A673 (cell line): ENCODE measurements at regions of chr19 and their contacts with region 1.

Region 1: DNA sequence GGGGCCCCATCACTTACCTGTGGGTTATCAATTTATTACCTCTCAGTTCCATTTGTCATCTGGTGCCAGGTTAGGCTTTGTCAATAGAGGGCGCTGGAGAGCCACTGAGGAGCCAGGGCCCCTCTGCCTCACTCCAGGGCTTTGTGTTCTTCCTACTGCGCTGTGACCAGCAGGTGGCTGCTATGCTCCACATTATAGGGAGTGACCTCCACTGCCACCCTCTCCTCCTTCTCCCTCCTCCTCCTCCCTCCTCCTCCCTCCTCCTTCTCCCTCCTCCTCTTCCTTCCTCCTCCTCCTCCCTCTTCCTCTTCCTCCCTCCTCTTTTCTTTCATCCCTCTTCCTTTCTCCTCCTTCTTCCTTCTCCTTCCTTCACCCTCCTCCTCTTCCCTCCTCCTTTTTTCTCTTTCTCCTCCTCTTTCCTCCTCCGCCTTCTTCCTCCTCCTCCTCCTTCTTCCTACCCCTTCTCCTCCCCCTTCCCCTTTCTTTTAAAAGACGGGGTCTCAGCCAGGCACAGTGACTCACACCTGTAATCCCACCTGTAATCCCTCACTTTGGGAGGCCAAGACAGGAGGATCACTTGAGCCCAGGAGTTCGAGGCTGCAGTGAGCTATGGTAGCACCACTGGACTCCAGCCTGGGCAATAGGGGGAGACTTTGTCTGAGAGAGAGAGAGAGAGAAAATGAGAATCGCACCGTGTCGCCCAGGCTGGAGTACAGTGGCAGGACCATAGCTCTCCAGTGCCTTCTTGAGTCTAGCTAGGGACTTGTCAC is 10.3 kb upstream of the ZBTB32 start:
- DNase-seq: peak; percentile 92
- H3K4me3 ChIP-seq: no peak overlapping the region
- H3K27ac ChIP-seq: no peak overlapping the region
- H3K4me1 ChIP-seq: no peaks in the 10 kb centered on the region
- H3K27me3 ChIP-seq: no peaks in the 10 kb centered on the region
- CTCF ChIP-seq: peak; percentile 98

Region 2: GRCh38 chr19:35270381-35270811 is 423.6 kb before region 1 on chr19:
- CTCF ChIA-PET with region 1: interaction called, 10 read pairs
- POLR2A ChIA-PET with region 1: no interaction called
- intact Hi-C with region 1: no loop called
- DNase-seq: no peak
- H3K4me3 ChIP-seq: no peak overlapping the region
- H3K27ac ChIP-seq: no peak overlapping the region
- H3K4me1 ChIP-seq: no peaks in the 10 kb centered on the region
- H3K27me3 ChIP-seq: no peaks in the 10 kb centered on the region
- CTCF ChIP-seq: no peak

Region 3: GRCh38 chr19:35716801-35717666 is 23.0 kb after region 1 on chr19:
- CTCF ChIA-PET with region 1: no interaction called
- POLR2A ChIA-PET with region 1: no interaction called
- intact Hi-C with region 1: loop called (anchors 2 kb)
- DNase-seq: peak; percentile 98
- H3K4me3 ChIP-seq: peak overlapping the region; percentile 96
- H3K27ac ChIP-seq: peak overlapping the region; percentile 89
- H3K4me1 ChIP-seq: peaks cover 8% of the 10 kb centered on the region
- H3K27me3 ChIP-seq: no peaks in the 10 kb centered on the region
- CTCF ChIP-seq: peak; percentile 87

Region 4: DNA sequence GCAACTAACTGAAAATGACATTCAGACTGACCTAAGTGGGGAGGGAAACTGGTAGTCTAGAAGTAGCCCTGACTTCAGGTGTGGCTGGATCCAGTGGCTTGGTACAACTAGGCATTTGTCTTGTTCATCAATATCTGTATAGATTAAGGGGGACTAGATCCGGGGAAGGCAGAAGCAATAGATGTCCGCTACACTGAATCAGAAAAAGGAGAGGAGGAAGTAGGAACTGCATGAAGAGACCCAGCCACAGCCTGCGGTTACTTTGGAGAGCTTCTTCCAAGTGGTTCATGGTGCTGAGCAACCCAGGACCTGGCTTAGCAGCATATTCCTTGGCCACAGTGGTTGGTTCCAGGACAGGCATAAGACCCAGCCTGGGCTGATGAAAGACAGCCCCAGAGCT is 128.6 kb after region 1 on chr19:
- CTCF ChIA-PET with region 1: interaction called, 4 read pairs
- POLR2A ChIA-PET with region 1: no interaction called
- intact Hi-C with region 1: loop called (anchors 5 kb)
- DNase-seq: no peak
- H3K4me3 ChIP-seq: no peak overlapping the region
- H3K27ac ChIP-seq: no peak overlapping the region
- H3K4me1 ChIP-seq: no peaks in the 10 kb centered on the region
- H3K27me3 ChIP-seq: peaks cover 23% of the 10 kb centered on the region
- CTCF ChIP-seq: no peak

Region 5: GRCh38 chr19:35931161-35931873 is 237.3 kb after region 1 on chr19:
- CTCF ChIA-PET with region 1: no interaction called
- POLR2A ChIA-PET with region 1: no interaction called
- intact Hi-C with region 1: loop called (anchors 2 kb)
- DNase-seq: peak; percentile 100
- H3K4me3 ChIP-seq: peak overlapping the region; percentile 35
- H3K27ac ChIP-seq: peak overlapping the region; percentile 43
- H3K4me1 ChIP-seq: peaks cover 7% of the 10 kb centered on the region
- H3K27me3 ChIP-seq: no peaks in the 10 kb centered on the region
- CTCF ChIP-seq: peak; percentile 96

Region 6: GRCh38 chr19:36160821-36161596 is 467.0 kb after region 1 on chr19:
- CTCF ChIA-PET with region 1: no interaction called
- POLR2A ChIA-PET with region 1: no interaction called
- intact Hi-C with region 1: no loop called
- DNase-seq: no peak
- H3K4me3 ChIP-seq: no peak overlapping the region
- H3K27ac ChIP-seq: no peak overlapping the region
- H3K4me1 ChIP-seq: no peaks in the 10 kb centered on the region
- H3K27me3 ChIP-seq: no peaks in the 10 kb centered on the region
- CTCF ChIP-seq: no peak